ENCODE measurements at regions of chr14 and their contacts with region 1.

Region 1: DNA sequence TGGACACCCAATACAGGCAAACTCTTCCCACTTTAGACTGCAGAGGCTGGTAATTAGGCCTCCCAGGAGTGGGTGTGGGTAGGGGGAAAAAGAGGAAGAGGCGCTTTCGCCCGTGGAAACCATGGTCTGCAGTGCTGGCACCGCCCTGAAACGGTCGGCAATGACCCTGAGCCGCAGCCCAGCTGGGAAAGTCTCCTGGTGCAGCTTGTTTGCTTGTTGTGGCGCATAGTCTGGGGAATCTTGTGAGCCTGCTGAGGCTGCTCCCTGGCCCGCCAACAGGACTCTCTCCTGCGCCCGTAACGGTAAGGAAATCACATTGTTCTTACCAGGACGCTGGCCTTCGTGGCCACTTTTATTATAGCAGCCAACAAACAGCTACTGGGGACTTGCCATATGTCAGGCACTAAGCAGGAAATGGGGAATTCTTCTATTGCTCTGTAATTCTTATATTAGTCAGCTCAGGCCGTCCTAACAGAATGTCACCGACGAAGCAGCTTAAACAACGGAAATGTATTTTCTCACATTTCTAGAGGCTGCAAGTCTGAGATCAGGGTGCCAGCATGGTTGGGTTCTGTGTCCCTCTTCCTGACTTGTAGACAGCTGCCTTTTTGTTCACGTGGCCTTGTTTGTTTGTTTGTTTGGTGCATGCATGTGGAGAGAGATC is 52.5 kb upstream of the RIN3 start:
- DNase-seq: no peak

Region 2: GRCh38 chr14:92677087-92677668 is 216.1 kb after region 1 on chr14:
- intact Hi-C with region 1: loop called in 1 of 2 experiments (anchors 10 kb)
- DNase-seq: no peak